Breast epithelium (tissue), 4 donors: ENCODE measurements at regions of chr19 and their contacts with region 1.

Region 1: GRCh38 chr19:12777217-12778016 is 2.1 kb upstream of the HOOK2 start:
- DNase-seq: peak; percentile 71 to 77
- H3K4me3 ChIP-seq: peak overlapping the region; percentile 54 to 80 (median 73)
- H3K27ac ChIP-seq: peak overlapping the region; percentile 97 to 98
- H3K4me1 ChIP-seq: peaks cover 0 to 5% of the 10 kb centered on the region in 2 donors
- H3K27me3 ChIP-seq: no peaks in the 10 kb centered on the region
- CTCF ChIP-seq: peak; percentile 97 to 99 (median 98)
- POLR2A ChIP-seq: no peak

Region 2: DNA sequence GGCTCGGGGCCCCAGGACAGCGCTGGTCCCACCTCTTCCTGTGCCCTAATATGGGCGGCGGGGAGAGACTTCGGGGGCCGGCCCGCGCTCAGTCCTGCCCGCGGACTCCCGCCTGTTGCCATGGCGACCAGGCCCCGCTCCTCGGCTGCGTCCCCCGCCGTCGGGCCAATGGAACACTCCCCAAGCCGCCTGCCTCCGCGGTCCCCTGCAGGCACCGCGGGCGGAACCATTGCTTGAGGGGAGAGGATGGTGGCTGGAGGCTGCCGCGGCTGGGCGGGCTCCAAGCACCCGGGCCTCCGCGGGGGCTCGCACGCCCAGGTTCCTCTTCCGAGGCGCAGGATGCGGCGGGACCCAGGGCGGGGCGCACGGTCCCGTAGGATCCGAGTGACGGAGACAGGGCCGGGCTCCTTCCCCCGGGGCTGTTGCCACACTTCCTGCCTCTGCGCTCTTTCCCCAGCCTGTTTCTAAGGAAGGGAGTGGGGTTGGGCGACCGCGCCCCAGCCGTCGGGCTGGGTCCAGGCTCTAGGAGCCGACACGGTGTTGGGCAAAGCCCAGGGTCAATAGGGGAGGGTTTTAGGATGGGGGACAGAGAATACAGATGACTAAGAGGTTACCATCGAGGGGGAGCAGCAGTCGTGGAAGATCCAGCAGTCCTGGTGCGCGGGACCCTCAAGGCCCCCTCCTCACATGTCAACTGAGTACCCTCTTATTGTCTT is 12.6 kb after region 1 on chr19:
- intact Hi-C with region 1: loop called (anchors 2 kb)
- DNase-seq: peak; percentile 95 to 96
- H3K4me3 ChIP-seq: peak overlapping the region; percentile 92 to 100 (median 95)
- H3K27ac ChIP-seq: peak overlapping the region; percentile 98 to 100
- H3K4me1 ChIP-seq: peaks cover 6 to 29% of the 10 kb centered on the region in 2 donors
- H3K27me3 ChIP-seq: no peaks in the 10 kb centered on the region
- CTCF ChIP-seq: peak in 1 of 3 donors; percentile 7
- POLR2A ChIP-seq: peak; percentile 96

Region 3: GRCh38 chr19:12806239-12807081 is 29.0 kb after region 1 on chr19 and contains the start of gene RNASEH2A:
- intact Hi-C with region 1: no loop called
- DNase-seq: peak; percentile 74 to 86
- H3K4me3 ChIP-seq: peak within 1 kb of the TSS; percentile 53 to 83 (median 71)
- H3K27ac ChIP-seq: peak within 1 kb of the TSS; percentile 59 to 68
- H3K4me1 ChIP-seq: peaks cover 0 to 5% of the 10 kb centered on the region in 2 donors
- H3K27me3 ChIP-seq: no peaks in the 10 kb centered on the region
- CTCF ChIP-seq: no peak
- POLR2A ChIP-seq: no peak
- total RNA-seq, gene RNASEH2A: 5.2 to 8.8 (median 8.5) TPM

Region 4: GRCh38 chr19:12867120-12868099 is 90.0 kb after region 1 on chr19:
- intact Hi-C with region 1: no loop called
- DNase-seq: peak in 1 of 2 donors; percentile 53
- H3K4me3 ChIP-seq: peak overlapping the region; percentile 28 to 66 (median 52)
- H3K27ac ChIP-seq: peak overlapping the region in 1 of 2 donors; percentile 25
- H3K4me1 ChIP-seq: no peaks in the 10 kb centered on the region
- H3K27me3 ChIP-seq: no peaks in the 10 kb centered on the region
- CTCF ChIP-seq: no peak
- POLR2A ChIP-seq: no peak